Common myeloid progenitor, CD34-positive (primary cell): ENCODE measurements at regions of chr1 and their contacts with region 1.

Region 1: DNA sequence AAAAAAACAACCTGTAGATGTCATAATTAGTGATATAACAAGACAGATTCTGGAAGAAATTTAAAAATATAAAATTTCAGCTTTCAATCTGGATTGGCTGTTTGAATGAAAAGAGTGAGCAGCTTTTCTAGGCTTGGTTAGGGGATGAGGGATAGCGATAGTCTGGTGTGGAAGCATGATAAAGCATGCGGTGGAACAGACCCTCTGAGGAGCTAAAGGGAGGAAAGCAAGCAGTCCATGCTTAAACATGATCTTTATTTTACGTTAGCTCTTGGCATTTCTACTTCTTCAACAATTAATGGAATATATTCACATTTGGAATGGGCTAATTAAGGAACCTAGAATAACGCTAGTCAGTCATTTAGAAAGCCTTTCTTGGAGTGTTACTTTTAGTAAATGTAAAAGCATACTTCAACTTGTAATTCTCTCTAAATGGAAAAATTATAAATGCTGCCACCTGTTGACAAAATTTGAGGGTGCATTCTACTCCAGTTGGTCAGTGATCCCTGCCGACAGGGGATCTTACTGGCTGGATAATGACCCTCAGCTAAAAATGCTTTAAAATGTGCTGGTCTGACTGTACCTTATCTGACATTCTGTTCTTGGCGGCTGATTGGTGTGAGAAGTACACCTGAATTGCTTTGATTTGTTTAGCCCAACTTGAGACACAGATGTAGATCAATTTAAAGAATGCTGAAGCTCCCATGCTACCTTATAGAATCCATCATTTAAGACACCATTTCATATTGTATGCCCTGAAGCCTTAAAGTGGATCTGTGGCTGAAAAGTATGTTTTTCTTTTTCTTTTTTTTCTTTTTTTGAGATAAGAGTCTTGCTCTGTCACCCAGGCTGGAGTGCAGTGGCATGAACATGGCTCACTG is 61.2 kb downstream of the AK4 start:
- DNase-seq: peak; percentile 50 to 58 (median 57)
- H3K4me3 ChIP-seq: no peak overlapping the region
- H3K27ac ChIP-seq: no peak overlapping the region
- H3K4me1 ChIP-seq: peaks cover 3 to 25% (median 14%) of the 10 kb centered on the region in 4 experiments
- H3K27me3 ChIP-seq: no peaks in the 10 kb centered on the region

Region 2: GRCh38 chr1:65067491-65068201 is 141.6 kb before region 1 on chr1:
- CTCF ChIA-PET with region 1: interaction called, 191 read pairs
- POLR2A ChIA-PET with region 1: no interaction called
- DNase-seq: peak; percentile 68 to 88 (median 86)
- H3K4me3 ChIP-seq: peak overlapping the region; percentile 85 to 98 (median 95)
- H3K27ac ChIP-seq: peak overlapping the region; percentile 93 to 97
- H3K4me1 ChIP-seq: peaks cover 19 to 57% (median 35%) of the 10 kb centered on the region in 4 experiments
- H3K27me3 ChIP-seq: no peaks in the 10 kb centered on the region

Region 3: DNA sequence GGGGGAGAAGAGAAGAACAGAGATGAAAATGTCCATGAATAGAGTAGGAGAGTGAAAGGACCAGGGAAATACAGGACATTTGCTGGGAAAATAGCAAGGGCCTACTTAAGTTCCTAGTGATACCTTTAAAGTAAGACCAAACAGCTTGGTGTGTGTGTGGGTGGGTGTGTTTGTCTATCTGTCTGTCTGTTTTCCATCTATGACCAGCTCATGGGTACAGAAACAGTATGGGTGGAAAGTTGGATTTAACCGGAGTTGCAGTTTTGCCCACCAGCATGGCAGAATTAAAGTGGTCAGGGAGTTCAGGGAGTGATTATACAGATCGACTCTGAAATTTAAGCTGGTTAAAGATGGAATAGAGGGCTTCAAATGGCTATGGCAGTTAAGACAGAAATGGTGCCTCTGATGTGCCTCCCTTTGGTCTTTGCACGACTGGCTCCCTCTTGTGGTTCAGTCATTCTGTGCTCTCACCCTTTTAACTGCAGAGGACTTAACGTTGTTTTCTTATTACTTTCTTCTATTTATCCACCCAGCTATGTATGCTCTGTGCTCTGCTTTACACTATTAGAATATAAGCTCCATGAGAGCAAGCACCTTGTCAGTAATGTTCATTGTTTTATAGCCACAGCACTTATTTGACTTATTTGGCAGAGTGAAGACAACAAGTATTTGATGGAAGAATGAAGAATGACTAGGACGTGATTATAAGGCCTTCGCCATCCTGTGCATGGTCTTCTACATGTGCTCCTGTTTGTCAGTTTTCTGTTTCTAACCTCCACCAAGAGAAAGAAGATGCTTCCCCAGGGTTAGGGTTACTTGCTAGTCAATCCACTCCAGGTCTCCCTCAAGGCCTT is 133.9 kb before region 1 on chr1:
- CTCF ChIA-PET with region 1: interaction called, 27 read pairs
- POLR2A ChIA-PET with region 1: no interaction called
- DNase-seq: peak; percentile 79 to 85 (median 84)
- H3K4me3 ChIP-seq: no peak overlapping the region
- H3K27ac ChIP-seq: no peak overlapping the region
- H3K4me1 ChIP-seq: peaks cover 0 to 6% (median under 1%) of the 10 kb centered on the region in 4 experiments
- H3K27me3 ChIP-seq: no peaks in the 10 kb centered on the region

Region 4: GRCh38 chr1:65195495-65196417 is 13.5 kb before region 1 on chr1:
- CTCF ChIA-PET with region 1: interaction called, 10 read pairs
- POLR2A ChIA-PET with region 1: no interaction called
- DNase-seq: peak in 2 of 3 donors; percentile 53 to 56
- H3K4me3 ChIP-seq: no peak overlapping the region
- H3K27ac ChIP-seq: no peak overlapping the region
- H3K4me1 ChIP-seq: peaks cover 0 to 6% (median 2%) of the 10 kb centered on the region in 4 experiments
- H3K27me3 ChIP-seq: no peaks in the 10 kb centered on the region

Region 5: DNA sequence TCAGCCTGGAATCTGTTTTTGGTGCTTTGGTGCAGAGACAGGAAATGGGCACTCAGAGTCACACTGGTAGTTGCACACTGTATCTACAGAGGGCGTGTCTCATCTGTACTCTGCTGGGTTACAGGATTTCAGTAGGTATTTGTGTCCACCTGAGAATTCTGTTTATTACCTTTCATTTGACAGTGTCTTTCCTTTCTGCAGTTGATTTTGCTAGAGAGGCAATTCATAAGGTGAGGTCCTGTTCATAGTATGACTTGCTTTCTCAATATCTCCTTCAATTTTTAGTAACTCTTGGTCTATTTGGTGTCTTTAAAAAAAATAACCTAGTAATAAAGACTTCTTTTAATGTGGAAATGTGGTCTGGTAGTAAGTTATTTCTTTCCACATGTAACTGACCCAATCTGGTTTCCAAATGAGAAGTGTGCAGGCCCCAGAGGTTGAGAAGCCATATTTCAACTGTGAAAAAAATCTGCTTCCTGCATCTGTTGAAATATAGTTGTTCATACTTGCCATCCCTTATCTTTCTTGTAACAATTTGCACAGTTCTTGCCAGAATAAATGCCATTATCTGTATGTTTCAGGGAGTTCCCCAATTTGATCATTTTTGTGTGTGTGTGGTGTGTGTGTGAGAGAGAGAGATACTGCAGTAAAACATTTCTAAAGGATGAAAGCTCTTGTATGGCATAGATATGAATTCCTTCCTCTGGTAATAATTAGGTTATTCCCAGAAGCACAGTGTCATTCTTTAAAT is 21.7 kb after region 1 on chr1:
- CTCF ChIA-PET with region 1: interaction called, 24 read pairs
- POLR2A ChIA-PET with region 1: no interaction called
- DNase-seq: peak; percentile 79 to 96 (median 90)
- H3K4me3 ChIP-seq: peak overlapping the region in 1 of 7 experiments; percentile 21
- H3K27ac ChIP-seq: peak overlapping the region; percentile 37 to 82
- H3K4me1 ChIP-seq: peaks cover 19 to 68% (median 45%) of the 10 kb centered on the region in 4 experiments
- H3K27me3 ChIP-seq: no peaks in the 10 kb centered on the region